H1 (cell line): ENCODE measurements at regions of chr1 and their contacts with region 1.

Region 1: GRCh38 chr1:110196917-110197765 is 13.0 kb upstream of the KCNC4 start:
- DNase-seq: peak in 1 of 2 experiments; percentile 63
- H3K4me3 ChIP-seq: no peak overlapping the region
- H3K27ac ChIP-seq: no peak overlapping the region
- H3K4me1 ChIP-seq: peaks cover 0 to 6% (median 2%) of the 10 kb centered on the region in 4 experiments; a peak in 2 of 7 replicates
- H3K27me3 ChIP-seq: no peaks in the 10 kb centered on the region
- CTCF ChIP-seq: peak; percentile 73 to 95 (median 81)
- EP300 ChIP-seq: no peak
- POLR2A ChIP-seq: no peak
- RAD21 ChIP-seq: peak; percentile 70 to 82

Region 2: GRCh38 chr1:110043016-110043415 is 154.1 kb before region 1 on chr1:
- CTCF ChIA-PET with region 1: no interaction called
- POLR2A ChIA-PET with region 1: no interaction called
- DNase-seq: no peak
- H3K4me3 ChIP-seq: no peak overlapping the region
- H3K27ac ChIP-seq: no peak overlapping the region
- H3K4me1 ChIP-seq: no peaks in the 10 kb centered on the region
- H3K27me3 ChIP-seq: no peaks in the 10 kb centered on the region
- CTCF ChIP-seq: no peak
- EP300 ChIP-seq: no peak
- POLR2A ChIP-seq: no peak
- RAD21 ChIP-seq: no peak

Region 3: GRCh38 chr1:110319332-110320152 is 122.4 kb after region 1 on chr1:
- CTCF ChIA-PET with region 1: interaction called, 1,001 read pairs
- POLR2A ChIA-PET with region 1: no interaction called
- DNase-seq: no peak
- H3K4me3 ChIP-seq: no peak overlapping the region
- H3K27ac ChIP-seq: no peak overlapping the region
- H3K4me1 ChIP-seq: no peaks in the 10 kb centered on the region
- H3K27me3 ChIP-seq: no peaks in the 10 kb centered on the region
- CTCF ChIP-seq: no peak
- EP300 ChIP-seq: no peak
- POLR2A ChIP-seq: no peak
- RAD21 ChIP-seq: no peak

Region 4: GRCh38 chr1:110455151-110455550 is 258.0 kb after region 1 on chr1:
- CTCF ChIA-PET with region 1: interaction called, 230 read pairs
- POLR2A ChIA-PET with region 1: no interaction called
- DNase-seq: peak in 1 of 2 experiments; percentile 73
- H3K4me3 ChIP-seq: no peak overlapping the region
- H3K27ac ChIP-seq: no peak overlapping the region
- H3K4me1 ChIP-seq: peaks cover 0 to 3% (median 2%) of the 10 kb centered on the region in 4 experiments; a peak in 4 of 7 replicates
- H3K27me3 ChIP-seq: no peaks in the 10 kb centered on the region
- CTCF ChIP-seq: peak; percentile 80 to 91 (median 84)
- EP300 ChIP-seq: no peak
- POLR2A ChIP-seq: no peak
- RAD21 ChIP-seq: peak; percentile 96 to 98